H1 (cell line): ENCODE measurements at regions of chr3 and their contacts with region 1.

Region 1: GRCh38 chr3:122458992-122459391 is 43.1 kb upstream of the WDR5B start:
- DNase-seq: no peak
- H3K4me3 ChIP-seq: no peak overlapping the region
- H3K27ac ChIP-seq: no peak overlapping the region
- H3K4me1 ChIP-seq: no peaks in the 10 kb centered on the region
- H3K27me3 ChIP-seq: no peaks in the 10 kb centered on the region
- CTCF ChIP-seq: peak in 2 of 3 experiments; percentile 8 to 33; a peak in 2 of 4 replicates
- EP300 ChIP-seq: no peak
- POLR2A ChIP-seq: no peak
- RAD21 ChIP-seq: peak; percentile 58 to 61

Region 2: GRCh38 chr3:122403489-122403888 is 55.5 kb before region 1 on chr3:
- CTCF ChIA-PET with region 1: no interaction called
- POLR2A ChIA-PET with region 1: no interaction called
- DNase-seq: no peak
- H3K4me3 ChIP-seq: no peak overlapping the region
- H3K27ac ChIP-seq: no peak overlapping the region
- H3K4me1 ChIP-seq: no peaks in the 10 kb centered on the region
- H3K27me3 ChIP-seq: no peaks in the 10 kb centered on the region
- CTCF ChIP-seq: no peak
- EP300 ChIP-seq: no peak
- POLR2A ChIP-seq: no peak
- RAD21 ChIP-seq: no peak

Region 3: DNA sequence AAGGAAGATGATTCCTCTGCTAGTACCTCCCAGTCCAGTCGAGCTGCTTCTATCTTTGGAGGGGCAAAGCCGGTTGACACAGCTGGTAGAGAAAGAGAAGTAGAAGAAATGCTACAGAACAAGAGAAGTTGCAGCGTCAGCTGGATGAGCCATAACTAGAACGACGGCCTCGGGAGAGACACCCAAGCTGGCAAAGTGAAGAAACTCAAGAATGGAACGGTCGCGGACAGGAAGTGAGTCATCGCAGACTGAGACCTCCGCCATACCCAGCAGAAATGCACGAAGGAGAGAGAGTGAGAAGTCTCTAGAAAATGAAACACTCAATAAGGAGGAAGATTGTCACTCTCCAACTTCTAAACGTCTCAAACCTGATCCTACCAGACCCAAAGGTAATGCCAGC is 202.6 kb after region 1 on chr3:
- CTCF ChIA-PET with region 1: interaction called, 11 read pairs
- POLR2A ChIA-PET with region 1: no interaction called
- DNase-seq: no peak
- H3K4me3 ChIP-seq: no peak overlapping the region
- H3K27ac ChIP-seq: no peak overlapping the region
- H3K4me1 ChIP-seq: no peaks in the 10 kb centered on the region
- H3K27me3 ChIP-seq: no peaks in the 10 kb centered on the region
- CTCF ChIP-seq: no peak
- EP300 ChIP-seq: no peak
- POLR2A ChIP-seq: no peak
- RAD21 ChIP-seq: no peak